ENCODE measurements at regions of chr2 and their contacts with region 1.

Region 1: DNA sequence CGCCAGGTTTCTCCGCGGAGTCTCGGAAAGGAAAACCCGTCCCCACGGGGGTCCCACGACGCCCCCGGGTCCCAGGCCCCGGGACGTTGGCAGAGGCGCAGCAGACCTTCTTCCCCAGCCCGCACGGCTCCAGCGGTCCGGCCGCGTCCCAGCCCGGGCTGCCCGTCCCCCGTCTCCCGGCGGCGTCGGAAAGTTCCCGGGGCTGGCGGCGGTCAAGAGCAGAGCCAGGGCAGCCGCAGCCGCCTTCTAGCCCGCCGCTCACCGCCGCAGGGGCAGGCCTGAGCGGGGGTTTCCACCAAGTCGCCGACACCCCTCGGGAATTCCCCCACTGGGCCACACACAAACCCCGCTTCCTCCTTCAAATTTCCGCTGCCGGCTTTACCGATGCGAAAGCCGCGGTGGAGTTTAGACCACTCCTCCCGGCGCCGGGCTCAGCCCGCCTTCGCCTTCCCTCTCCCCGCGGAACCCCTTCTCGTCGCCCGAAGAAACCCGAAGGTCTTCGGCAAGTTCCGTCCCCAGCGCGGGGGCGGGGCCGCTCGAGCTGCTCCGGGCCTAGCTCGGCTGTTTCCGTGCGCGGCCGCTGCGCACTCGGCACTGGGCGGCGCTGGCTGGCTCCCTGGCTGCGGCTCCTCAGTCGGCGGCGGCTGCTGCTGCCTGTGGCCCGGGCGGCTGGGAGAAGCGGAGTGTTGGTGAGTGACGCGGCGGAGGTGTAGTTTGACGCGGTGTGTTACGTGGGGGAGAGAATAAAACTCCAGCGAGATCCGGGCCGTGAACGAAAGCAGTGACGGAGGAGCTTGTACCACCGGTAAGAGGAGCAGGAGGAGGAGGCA is at the start of gene CREB1:
- DNase-seq: peak; percentile 100
- H3K4me3 Mint-ChIP-seq: peak within 1 kb of the TSS; percentile 99
- H3K27ac Mint-ChIP-seq: peak within 1 kb of the TSS; percentile 100
- H3K4me1 Mint-ChIP-seq: peaks cover 49% of the 10 kb centered on the region
- H3K27me3 Mint-ChIP-seq: no peaks in the 10 kb centered on the region
- total RNA-seq, gene CREB1: 115 and 136 TPM in 2 replicates

Region 2: DNA sequence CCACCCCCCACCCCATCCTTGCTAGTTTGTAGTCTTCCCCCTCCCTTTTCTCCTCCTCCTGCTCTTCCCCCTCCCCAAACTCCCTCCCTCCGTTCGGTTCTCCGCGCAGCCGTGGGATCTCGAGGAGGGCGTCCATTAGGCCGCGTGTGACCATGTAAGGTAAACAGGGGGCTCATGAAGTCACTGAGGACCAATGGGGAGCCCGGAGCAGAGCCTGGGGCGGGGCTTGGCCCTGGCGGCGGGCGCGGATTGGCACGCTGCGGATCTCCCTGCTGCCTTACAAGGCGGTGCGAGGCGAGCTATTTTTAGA is 363.6 kb before region 1 on chr2:
- intact Hi-C with region 1: loop called (anchors 1 kb)
- DNase-seq: peak; percentile 99
- H3K4me3 Mint-ChIP-seq: peak overlapping the region; percentile 98
- H3K27ac Mint-ChIP-seq: peak overlapping the region; percentile 97
- H3K4me1 Mint-ChIP-seq: peaks cover 46% of the 10 kb centered on the region
- H3K27me3 Mint-ChIP-seq: no peaks in the 10 kb centered on the region

Region 3: GRCh38 chr2:207448006-207448405 is 81.5 kb before region 1 on chr2:
- intact Hi-C with region 1: no loop called
- DNase-seq: no peak
- H3K4me3 Mint-ChIP-seq: no peak overlapping the region
- H3K27ac Mint-ChIP-seq: no peak overlapping the region
- H3K4me1 Mint-ChIP-seq: peaks cover 2% of the 10 kb centered on the region
- H3K27me3 Mint-ChIP-seq: peaks cover 5% of the 10 kb centered on the region

Region 4: GRCh38 chr2:207491956-207492860 is 37.3 kb before region 1 on chr2:
- intact Hi-C with region 1: loop called (anchors 5 kb)
- DNase-seq: no peak
- H3K4me3 Mint-ChIP-seq: no peak overlapping the region
- H3K27ac Mint-ChIP-seq: no peak overlapping the region
- H3K4me1 Mint-ChIP-seq: peaks cover 14% of the 10 kb centered on the region
- H3K27me3 Mint-ChIP-seq: peaks cover 2% of the 10 kb centered on the region

Region 5: DNA sequence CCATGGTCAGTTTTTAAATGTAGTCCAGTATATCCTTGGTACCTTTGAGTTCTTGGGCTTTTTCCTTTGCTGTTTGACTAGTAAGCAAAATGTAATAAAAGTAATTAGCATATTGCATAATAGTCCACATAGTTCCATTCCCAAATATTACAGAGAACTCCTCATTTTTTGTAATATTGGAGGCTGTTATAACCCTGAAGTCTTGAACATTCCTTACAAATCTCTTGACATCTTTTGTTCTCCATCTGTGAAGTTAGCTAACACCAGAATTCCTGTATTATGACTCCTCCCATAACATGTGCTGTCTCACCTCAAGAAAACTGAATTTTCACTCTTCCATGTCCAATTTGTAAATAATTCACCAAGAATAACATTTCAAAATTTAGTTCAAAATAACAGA is 17.3 kb after region 1 on chr2:
- intact Hi-C with region 1: loop called (anchors 2 kb)
- DNase-seq: no peak
- H3K4me3 Mint-ChIP-seq: no peak overlapping the region
- H3K27ac Mint-ChIP-seq: peak overlapping the region; percentile 75
- H3K4me1 Mint-ChIP-seq: peaks cover 48% of the 10 kb centered on the region
- H3K27me3 Mint-ChIP-seq: no peaks in the 10 kb centered on the region

Region 6: GRCh38 chr2:207710814-207711740 is 181.5 kb after region 1 on chr2 and contains the start of gene CCNYL1:
- intact Hi-C with region 1: loop called (anchors 1 kb)
- DNase-seq: peak; percentile 99
- H3K4me3 Mint-ChIP-seq: peak within 1 kb of the TSS; percentile 96
- H3K27ac Mint-ChIP-seq: peak within 1 kb of the TSS; percentile 87
- H3K4me1 Mint-ChIP-seq: peaks cover 21% of the 10 kb centered on the region
- H3K27me3 Mint-ChIP-seq: no peaks in the 10 kb centered on the region
- total RNA-seq, gene CCNYL1: 6.7 and 8.2 TPM in 2 replicates

Region 7: GRCh38 chr2:208265801-208266552 is 736.4 kb after region 1 on chr2 and contains the start of gene PIKFYVE:
- intact Hi-C with region 1: loop called (anchors 10 kb)
- DNase-seq: peak; percentile 89
- H3K4me3 Mint-ChIP-seq: peak within 1 kb of the TSS; percentile 92
- H3K27ac Mint-ChIP-seq: peak within 1 kb of the TSS; percentile 95
- H3K4me1 Mint-ChIP-seq: peaks cover 45% of the 10 kb centered on the region
- H3K27me3 Mint-ChIP-seq: no peaks in the 10 kb centered on the region
- total RNA-seq, gene PIKFYVE: 30.3 and 34.1 TPM in 2 replicates

Measured in activated T-helper 2 cell treated with anti-CD3 and anti-CD28 coated beads, Interferon-gamma antibody, Interleukin-2, Interleukin-4, amounts not matched to agents 10 μg/mL and 5 μg/mL and 100 μg/mL, durations not matched to agents 14 hours and 24 hours and 36 hours (primary cell).